Activated CD4-positive, alpha-beta T cell treated with anti-CD3 and anti-CD28 coated beads, Interleukin-2, amount 10 ng/mL, durations not matched to agents 7 days and 5 days (primary cell): ENCODE measurements at regions of chr1 and their contacts with region 1.

Region 1: DNA sequence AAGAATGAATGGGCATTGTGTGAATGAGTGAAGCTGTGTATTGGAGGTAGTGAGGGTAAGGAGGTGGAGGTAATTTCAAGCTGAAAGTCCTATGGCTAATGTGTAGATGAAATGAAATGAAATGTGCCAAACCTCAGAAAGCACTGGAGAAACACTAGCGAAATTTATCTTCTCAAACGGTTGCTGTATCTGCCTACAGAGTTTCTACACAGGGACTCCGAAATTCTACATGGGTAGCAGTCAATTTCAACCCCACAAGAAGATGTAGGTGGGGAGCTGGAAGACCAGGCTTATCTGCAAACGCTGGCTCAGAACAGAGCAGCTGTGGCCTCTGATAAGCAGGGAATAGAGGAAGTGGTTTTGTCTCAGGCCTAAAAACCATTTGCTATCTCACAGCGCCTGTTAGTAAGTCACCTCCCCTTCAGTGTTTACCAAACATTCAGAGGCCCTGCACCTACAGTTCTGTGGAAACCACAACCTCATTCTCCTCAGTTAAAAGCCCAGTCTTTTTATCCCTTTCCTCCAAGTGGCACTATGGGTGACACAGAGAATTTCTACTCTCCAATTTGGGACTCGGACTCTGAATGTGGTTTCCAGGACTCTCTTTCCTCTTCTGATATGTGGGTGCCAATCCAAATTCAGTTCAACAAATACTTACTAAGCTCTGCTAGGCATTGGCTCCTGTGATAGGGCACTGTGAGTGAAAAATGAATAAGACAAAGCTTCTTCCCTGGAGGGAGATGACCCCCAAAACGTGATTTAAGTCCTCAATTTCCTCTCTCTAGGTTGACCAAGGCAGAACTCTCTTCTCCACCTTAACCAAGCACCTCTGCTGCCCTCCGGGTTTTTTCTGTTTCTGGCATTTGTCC is 17.2 kb upstream of the SLAMF6 start:
- DNase-seq: peak; percentile 76
- H3K4me3 Mint-ChIP-seq: peak overlapping the region; percentile 33
- H3K27ac Mint-ChIP-seq: peak overlapping the region; percentile 94
- H3K4me1 Mint-ChIP-seq: peaks cover 52% of the 10 kb centered on the region
- H3K27me3 Mint-ChIP-seq: no peaks in the 10 kb centered on the region

Region 2: GRCh38 chr1:160550572-160551034 is 10.4 kb after region 1 on chr1:
- CTCF ChIA-PET with region 1: interaction called, 11 read pairs
- POLR2A ChIA-PET with region 1: no interaction called
- DNase-seq: peak; percentile 35
- H3K4me3 Mint-ChIP-seq: no peak overlapping the region
- H3K27ac Mint-ChIP-seq: no peak overlapping the region
- H3K4me1 Mint-ChIP-seq: no peaks in the 10 kb centered on the region
- H3K27me3 Mint-ChIP-seq: no peaks in the 10 kb centered on the region